A549 (cell line): ENCODE measurements at regions of chr3 and their contacts with region 1.

Region 1: GRCh38 chr3:72924055-72924454 is 36.2 kb downstream of the GXYLT2 start:
- DNase-seq: peak in 1 of 2 experiments; percentile 27
- ATAC-seq: peak; percentile 19 to 69; a peak in 3 of 6 replicates
- H3K4me3 ChIP-seq: no peak overlapping the region
- H3K27ac ChIP-seq: no peak overlapping the region
- H3K4me1 ChIP-seq: no peaks in the 10 kb centered on the region
- CTCF ChIP-seq: no peak
- EP300 ChIP-seq: no peak
- POLR2A ChIP-seq: no peak
- RAD21 ChIP-seq: no peak

Region 2: GRCh38 chr3:72938471-72939265 is 14.6 kb after region 1 on chr3:
- CTCF ChIA-PET with region 1: interaction called, 10 read pairs
- POLR2A ChIA-PET with region 1: no interaction called
- DNase-seq: peak; percentile 70
- ATAC-seq: peak; percentile 94 to 98
- H3K4me3 ChIP-seq: no peak overlapping the region
- H3K27ac ChIP-seq: peak overlapping the region in 1 of 2 experiments; percentile 33; a peak in 1 of 6 replicates
- H3K4me1 ChIP-seq: peaks cover 6% of the 10 kb centered on the region; the same call in 1 of the 3 replicates
- CTCF ChIP-seq: peak; percentile 79
- EP300 ChIP-seq: no peak
- POLR2A ChIP-seq: no peak
- RAD21 ChIP-seq: peak; percentile 55 to 74

Region 3: DNA sequence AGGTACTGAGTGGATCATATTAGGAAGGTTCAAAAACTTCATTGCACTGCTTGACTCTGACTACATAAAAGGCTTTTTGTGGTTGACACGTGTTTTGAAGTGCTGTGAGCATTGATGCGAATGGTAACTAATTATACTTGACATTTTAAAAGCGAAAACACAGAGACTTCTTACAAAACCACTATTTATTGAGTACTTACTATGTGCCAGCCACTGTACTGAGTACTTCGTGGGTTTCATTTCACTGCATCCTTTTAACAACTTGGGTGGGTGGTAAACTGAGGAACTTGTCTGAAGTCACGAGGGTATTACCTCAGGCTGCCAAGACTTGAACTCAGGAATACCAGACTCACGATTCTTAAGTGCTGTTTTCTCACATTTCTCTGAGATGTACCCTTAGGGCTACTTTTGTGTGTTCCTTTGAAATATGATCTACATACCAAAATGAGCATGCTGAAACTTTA is 27.2 kb after region 1 on chr3:
- CTCF ChIA-PET with region 1: no interaction called
- POLR2A ChIA-PET with region 1: no interaction called
- DNase-seq: no peak
- ATAC-seq: no peak
- H3K4me3 ChIP-seq: no peak overlapping the region
- H3K27ac ChIP-seq: no peak overlapping the region
- H3K4me1 ChIP-seq: peaks cover 9% of the 10 kb centered on the region; the same call in 2 of the 3 replicates
- CTCF ChIP-seq: no peak
- EP300 ChIP-seq: no peak
- POLR2A ChIP-seq: no peak
- RAD21 ChIP-seq: no peak